PC-9 (cell line): ENCODE measurements at regions of chr11 and their contacts with region 1.

Region 1: DNA sequence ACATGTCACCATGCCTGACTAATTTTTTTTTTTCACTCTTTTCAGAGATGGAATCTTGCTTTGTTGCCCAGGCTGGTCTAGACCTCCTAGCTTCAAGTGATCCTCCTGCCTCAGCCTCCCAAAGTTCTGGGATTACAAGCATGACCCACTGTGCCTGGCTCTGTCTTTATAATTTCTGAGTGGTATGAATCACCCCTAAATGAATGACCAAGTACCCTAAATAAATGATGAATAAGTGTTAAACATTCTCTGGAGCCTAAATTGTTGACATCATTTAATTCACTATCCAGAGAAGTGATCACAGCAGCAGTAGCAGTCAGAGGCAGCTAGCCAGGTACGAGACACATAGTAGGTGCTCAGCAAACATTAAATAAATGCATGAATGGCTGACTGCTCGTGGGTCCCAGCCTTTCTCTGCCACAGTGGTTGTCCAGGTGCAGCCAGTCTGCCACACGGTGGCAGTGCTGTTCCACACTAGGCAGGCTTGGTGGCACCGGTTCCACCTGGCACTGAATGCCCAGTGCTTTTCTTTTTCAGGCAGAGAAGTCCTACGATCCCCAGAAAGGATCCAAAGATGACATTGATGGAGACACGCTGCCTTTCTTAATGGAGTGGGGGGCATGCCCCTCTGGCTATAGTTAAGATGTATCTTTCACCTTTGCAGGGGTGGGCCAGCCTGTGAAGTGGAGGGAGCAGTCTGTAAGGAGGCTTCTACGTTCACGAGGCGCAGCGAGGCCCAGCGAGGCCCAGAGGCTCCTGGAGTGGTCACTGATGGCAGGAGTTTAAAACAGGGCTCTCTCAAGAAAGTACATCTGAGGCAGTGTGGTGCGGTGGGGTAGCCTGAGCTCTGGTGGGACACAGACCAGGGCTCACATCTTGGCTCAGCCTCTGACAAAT is 8.7 kb upstream of the TTC12 start:
- DNase-seq: peak; percentile 56 to 69
- H3K4me3 ChIP-seq: no peak overlapping the region
- H3K27ac ChIP-seq: no peak overlapping the region
- H3K4me1 ChIP-seq: no peaks in the 10 kb centered on the region
- H3K27me3 ChIP-seq: peaks cover 17% of the 10 kb centered on the region; the same call in 1 of the 2 replicates
- CTCF ChIP-seq: peak; percentile 96

Region 2: DNA sequence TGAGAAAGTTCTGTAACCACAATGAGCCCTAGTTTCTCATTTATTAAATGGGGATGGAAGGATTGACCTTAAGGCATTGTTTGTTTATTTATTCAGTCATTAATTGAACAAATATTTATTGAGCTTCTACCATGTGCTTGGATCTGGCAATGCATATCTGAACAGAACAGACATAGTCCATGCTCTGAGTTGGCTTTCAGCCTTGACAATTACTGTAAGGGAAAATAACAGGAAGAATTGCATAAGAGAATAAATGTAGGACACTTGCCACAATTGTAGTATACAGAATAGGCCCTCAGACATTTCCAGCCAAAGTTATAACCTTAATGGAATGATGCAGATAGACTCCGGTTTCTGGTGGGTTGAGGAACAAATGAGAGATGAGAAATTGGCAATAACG is 151.8 kb before region 1 on chr11:
- CTCF ChIA-PET with region 1: no interaction called
- POLR2A ChIA-PET with region 1: no interaction called
- intact Hi-C with region 1: no loop called
- DNase-seq: no peak
- H3K4me3 ChIP-seq: no peak overlapping the region
- H3K27ac ChIP-seq: no peak overlapping the region
- H3K4me1 ChIP-seq: no peaks in the 10 kb centered on the region
- H3K27me3 ChIP-seq: no peaks in the 10 kb centered on the region
- CTCF ChIP-seq: no peak

Region 3: GRCh38 chr11:113419454-113420003 is 113.8 kb after region 1 on chr11:
- CTCF ChIA-PET with region 1: no interaction called
- POLR2A ChIA-PET with region 1: no interaction called
- intact Hi-C with region 1: no loop called
- DNase-seq: no peak
- H3K4me3 ChIP-seq: no peak overlapping the region
- H3K27ac ChIP-seq: no peak overlapping the region
- H3K4me1 ChIP-seq: no peaks in the 10 kb centered on the region
- H3K27me3 ChIP-seq: peaks cover 99% of the 10 kb centered on the region
- CTCF ChIP-seq: no peak

Region 4: GRCh38 chr11:113532697-113533424 is 227.2 kb after region 1 on chr11:
- CTCF ChIA-PET with region 1: no interaction called
- POLR2A ChIA-PET with region 1: no interaction called
- intact Hi-C with region 1: loop called (anchors 1 kb)
- DNase-seq: peak in 1 of 2 experiments; percentile 57
- H3K4me3 ChIP-seq: no peak overlapping the region
- H3K27ac ChIP-seq: no peak overlapping the region
- H3K4me1 ChIP-seq: no peaks in the 10 kb centered on the region
- H3K27me3 ChIP-seq: peaks cover 51% of the 10 kb centered on the region
- CTCF ChIP-seq: peak; percentile 90

Region 5: DNA sequence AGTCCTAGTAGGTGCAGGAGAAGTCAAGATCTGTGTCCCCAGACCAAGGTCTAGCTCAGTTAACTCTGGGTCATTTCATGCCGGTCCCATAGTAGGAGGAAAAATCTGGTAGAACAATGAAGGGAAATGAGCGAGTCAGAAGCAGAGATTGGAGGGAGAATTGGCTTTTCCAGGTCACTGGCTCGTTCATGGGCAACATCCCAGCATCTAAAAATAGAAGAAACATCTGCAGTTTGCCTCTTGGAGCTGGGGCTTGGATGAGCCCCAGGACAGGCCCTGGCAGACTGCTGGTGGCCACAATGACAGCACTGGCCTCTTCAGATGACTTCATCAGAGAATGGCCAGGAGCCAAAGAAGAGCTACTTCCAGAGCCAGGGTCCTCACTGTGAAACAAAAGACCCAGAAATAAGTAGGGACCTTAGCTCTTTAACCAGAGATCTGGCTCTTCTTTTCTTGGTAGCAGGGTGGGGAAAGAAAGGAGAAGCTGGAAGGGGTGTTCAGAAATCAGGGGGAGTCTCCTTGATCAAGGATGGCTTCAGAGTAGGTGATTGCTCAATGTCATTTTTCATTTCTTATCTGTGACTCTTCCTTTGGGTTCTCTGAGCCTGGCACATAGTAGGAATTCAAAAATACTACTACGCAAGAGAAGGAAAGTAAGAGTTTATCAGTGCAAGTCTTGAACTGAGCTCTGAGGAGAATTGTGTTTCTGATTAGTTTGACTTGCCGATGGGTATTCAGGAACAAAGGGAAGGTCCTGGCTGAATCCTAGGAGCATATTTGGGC is 297.8 kb after region 1 on chr11:
- CTCF ChIA-PET with region 1: no interaction called
- POLR2A ChIA-PET with region 1: no interaction called
- intact Hi-C with region 1: no loop called
- DNase-seq: no peak
- H3K4me3 ChIP-seq: no peak overlapping the region
- H3K27ac ChIP-seq: no peak overlapping the region
- H3K4me1 ChIP-seq: no peaks in the 10 kb centered on the region
- H3K27me3 ChIP-seq: peaks cover 33% of the 10 kb centered on the region; the same call in 1 of the 2 replicates
- CTCF ChIP-seq: no peak

Region 6: GRCh38 chr11:113730887-113731726 is 425.4 kb after region 1 on chr11:
- CTCF ChIA-PET with region 1: interaction called, 4 read pairs
- POLR2A ChIA-PET with region 1: no interaction called
- intact Hi-C with region 1: loop called (anchors 1 kb)
- DNase-seq: peak in 1 of 2 experiments; percentile 25
- H3K4me3 ChIP-seq: no peak overlapping the region
- H3K27ac ChIP-seq: no peak overlapping the region
- H3K4me1 ChIP-seq: no peaks in the 10 kb centered on the region
- H3K27me3 ChIP-seq: no peaks in the 10 kb centered on the region
- CTCF ChIP-seq: peak; percentile 67

Region 7: GRCh38 chr11:113796663-113797259 is 491.1 kb after region 1 on chr11:
- CTCF ChIA-PET with region 1: no interaction called
- POLR2A ChIA-PET with region 1: no interaction called
- intact Hi-C with region 1: loop called (anchors 5 kb)
- DNase-seq: no peak
- H3K4me3 ChIP-seq: no peak overlapping the region
- H3K27ac ChIP-seq: no peak overlapping the region
- H3K4me1 ChIP-seq: no peaks in the 10 kb centered on the region
- H3K27me3 ChIP-seq: no peaks in the 10 kb centered on the region
- CTCF ChIP-seq: peak; percentile 77